Activated CD4-positive, alpha-beta T cell treated with anti-CD3 and anti-CD28 coated beads for 36 hours (primary cell): ENCODE measurements at regions of chr12 and their contacts with region 1.

Region 1: DNA sequence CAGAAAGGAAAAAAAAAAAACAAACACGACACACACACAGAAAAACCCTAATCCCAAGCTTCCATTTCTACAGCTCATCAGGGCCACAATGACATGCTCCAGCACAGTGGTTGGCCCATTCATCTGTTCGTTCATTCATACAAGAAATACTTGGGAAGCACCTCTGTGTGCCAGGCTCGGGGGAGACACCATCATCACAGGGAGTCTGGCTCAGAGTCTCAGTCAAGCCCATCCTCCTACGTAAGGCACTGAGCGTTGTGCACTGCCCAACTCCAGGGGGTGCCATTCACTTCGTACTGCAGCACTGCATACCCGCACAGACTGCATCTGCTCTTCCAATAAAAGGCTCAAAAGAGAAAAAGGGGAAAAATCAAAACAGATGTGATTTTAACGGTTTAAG is 15.3 kb downstream of the VPS37B start:
- DNase-seq: peak; percentile 66
- ATAC-seq: peak; percentile 71
- H3K4me3 Mint-ChIP-seq: no peak overlapping the region
- H3K27ac Mint-ChIP-seq: no peak overlapping the region
- H3K4me1 Mint-ChIP-seq: peaks cover 70% of the 10 kb centered on the region
- H3K27me3 Mint-ChIP-seq: peaks cover 24% of the 10 kb centered on the region

Region 2: GRCh38 chr12:122917504-122918121 is 36.9 kb after region 1 on chr12:
- CTCF ChIA-PET with region 1: no interaction called
- POLR2A ChIA-PET with region 1: no interaction called
- intact Hi-C with region 1: loop called in 1 of 2 experiments (anchors 2 kb)
- DNase-seq: no peak
- ATAC-seq: no peak
- H3K4me3 Mint-ChIP-seq: no peak overlapping the region
- H3K27ac Mint-ChIP-seq: no peak overlapping the region
- H3K4me1 Mint-ChIP-seq: peaks cover 5% of the 10 kb centered on the region
- H3K27me3 Mint-ChIP-seq: no peaks in the 10 kb centered on the region

Region 3: GRCh38 chr12:122951979-122952892 is 71.6 kb after region 1 on chr12:
- CTCF ChIA-PET with region 1: interaction called, 10 read pairs
- POLR2A ChIA-PET with region 1: no interaction called
- intact Hi-C with region 1: loop called in 1 of 2 experiments (anchors 1 kb)
- DNase-seq: peak; percentile 85
- ATAC-seq: peak; percentile 97
- H3K4me3 Mint-ChIP-seq: no peak overlapping the region
- H3K27ac Mint-ChIP-seq: no peak overlapping the region
- H3K4me1 Mint-ChIP-seq: peaks cover 4% of the 10 kb centered on the region
- H3K27me3 Mint-ChIP-seq: no peaks in the 10 kb centered on the region

Region 4: DNA sequence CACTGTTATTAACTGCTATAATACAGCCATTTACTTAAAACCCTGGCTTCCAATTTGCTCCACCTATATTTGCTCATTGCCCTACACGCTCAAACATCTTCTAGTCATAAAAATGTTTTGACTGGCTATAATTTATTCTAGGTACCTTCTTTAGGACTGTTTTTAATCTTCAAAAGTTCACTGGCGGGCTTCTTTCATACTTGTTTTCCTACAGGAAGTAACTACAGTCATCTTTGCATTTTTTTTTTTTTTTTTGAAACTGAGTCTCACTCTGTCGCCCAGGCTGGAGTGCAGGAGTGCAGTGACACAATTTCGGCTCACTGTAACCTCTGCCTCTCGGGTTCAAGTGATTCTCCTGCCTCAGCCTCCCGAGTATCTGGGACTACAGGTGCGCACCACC is 319.7 kb after region 1 on chr12:
- CTCF ChIA-PET with region 1: interaction called, 10 read pairs
- POLR2A ChIA-PET with region 1: no interaction called
- intact Hi-C with region 1: no loop called
- DNase-seq: peak; percentile 29
- ATAC-seq: peak; percentile 90
- H3K4me3 Mint-ChIP-seq: no peak overlapping the region
- H3K27ac Mint-ChIP-seq: peak overlapping the region; percentile 72
- H3K4me1 Mint-ChIP-seq: peaks cover 17% of the 10 kb centered on the region
- H3K27me3 Mint-ChIP-seq: no peaks in the 10 kb centered on the region